Activated T-helper 2 cell treated with anti-CD3 and anti-CD28 coated beads, Interferon-gamma antibody, Interleukin-2, Interleukin-4, amounts not matched to agents 10 μg/mL and 5 μg/mL and 100 μg/mL, durations not matched to agents 14 hours and 24 hours and 36 hours (primary cell): ENCODE measurements at regions of chr11 and their contacts with region 1.

Region 1: DNA sequence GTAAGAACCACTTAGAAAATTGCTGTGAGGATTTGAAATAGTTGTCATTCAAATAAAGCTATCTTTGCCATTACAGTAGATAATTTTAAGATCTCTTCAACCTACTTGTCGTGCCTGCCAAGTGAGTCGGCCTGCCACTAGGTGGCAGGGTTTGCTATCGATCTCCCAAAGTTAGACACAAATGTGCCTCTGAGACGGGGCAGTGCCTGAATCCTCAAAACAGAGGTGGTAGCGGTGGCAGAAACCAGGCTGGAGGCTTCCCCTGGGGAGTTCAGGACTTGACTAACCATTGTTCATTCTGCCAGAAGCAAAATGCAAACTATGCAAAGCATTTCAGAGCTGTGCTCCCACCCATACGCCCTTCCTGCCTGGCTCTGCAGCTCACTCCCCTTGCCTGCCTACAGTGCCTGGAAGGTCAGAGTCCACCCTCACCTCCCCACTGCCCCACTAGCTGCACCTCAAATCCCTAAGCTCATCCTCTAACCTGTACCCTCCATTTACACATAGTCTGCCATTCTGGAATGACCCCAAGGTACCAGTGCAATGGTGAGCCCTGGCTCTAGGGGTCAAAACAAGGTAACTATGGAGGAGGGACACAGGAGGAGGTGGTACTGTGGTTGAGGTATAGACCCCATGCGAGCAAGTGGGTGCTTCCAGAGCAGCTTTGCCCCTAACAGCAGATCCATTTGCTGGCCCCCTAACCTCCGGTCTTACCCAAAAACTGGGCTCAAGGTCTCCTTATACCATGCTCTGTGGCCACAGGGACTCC is 82.1 kb downstream of the C11orf58 start:
- DNase-seq: peak; percentile 23
- H3K4me3 Mint-ChIP-seq: no peak overlapping the region
- H3K27ac Mint-ChIP-seq: peak overlapping the region; percentile 33
- H3K4me1 Mint-ChIP-seq: peaks cover 24% of the 10 kb centered on the region
- H3K27me3 Mint-ChIP-seq: peaks cover 2% of the 10 kb centered on the region

Region 2: DNA sequence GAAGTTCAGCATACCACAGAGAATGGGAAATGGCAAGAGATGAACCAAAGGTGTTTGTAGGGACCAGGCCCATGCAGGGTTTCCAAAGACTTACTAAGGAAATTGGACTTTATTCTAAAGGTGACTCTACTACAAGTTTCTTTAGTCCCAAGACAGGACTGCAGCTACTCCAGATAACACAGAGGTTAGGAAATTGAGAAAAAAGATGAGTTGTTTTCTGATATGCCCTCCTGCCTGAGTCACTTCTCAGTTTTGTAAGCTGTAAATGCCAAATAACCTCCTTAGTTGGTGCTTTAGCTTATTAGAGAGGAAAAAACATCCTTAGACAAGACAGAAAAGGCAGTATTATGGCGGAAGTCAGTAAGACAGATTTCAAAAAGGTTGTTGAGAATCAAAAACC is 13.9 kb after region 1 on chr11:
- intact Hi-C with region 1: loop called (anchors 2 kb)
- DNase-seq: no peak
- H3K4me3 Mint-ChIP-seq: no peak overlapping the region
- H3K27ac Mint-ChIP-seq: peak overlapping the region; percentile 74
- H3K4me1 Mint-ChIP-seq: peaks cover 20% of the 10 kb centered on the region
- H3K27me3 Mint-ChIP-seq: no peaks in the 10 kb centered on the region

Region 3: GRCh38 chr11:16881074-16881709 is 60.7 kb after region 1 on chr11:
- intact Hi-C with region 1: loop called (anchors 2 kb)
- DNase-seq: no peak
- H3K4me3 Mint-ChIP-seq: no peak overlapping the region
- H3K27ac Mint-ChIP-seq: no peak overlapping the region
- H3K4me1 Mint-ChIP-seq: peaks cover 14% of the 10 kb centered on the region
- H3K27me3 Mint-ChIP-seq: no peaks in the 10 kb centered on the region

Region 4: DNA sequence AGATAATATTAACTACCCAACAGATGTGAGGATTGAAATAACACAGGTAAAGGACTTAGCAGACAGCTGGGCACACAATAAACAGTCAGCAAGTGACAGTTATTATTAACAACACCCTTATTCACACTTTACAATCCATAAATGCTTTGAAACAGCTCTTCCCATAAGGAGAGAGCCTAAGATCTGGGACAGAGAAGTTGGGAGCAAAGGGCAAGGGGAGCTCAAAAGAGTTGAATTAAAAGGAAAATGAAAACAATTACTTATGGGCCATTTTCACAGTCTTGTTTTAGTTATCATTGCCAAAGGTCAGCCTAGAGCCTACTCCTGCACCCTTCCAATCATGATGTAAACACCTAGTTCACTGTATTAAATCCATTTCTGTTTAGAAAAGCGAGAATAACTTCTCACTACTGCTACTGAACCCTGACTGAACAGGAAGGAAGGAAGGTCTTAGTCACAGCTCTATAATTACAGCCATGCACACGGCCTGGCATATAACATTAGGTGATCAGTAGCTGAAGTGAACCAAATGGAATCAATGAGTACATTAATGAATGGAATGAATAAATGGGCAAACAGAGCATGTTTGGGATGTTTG is 82.4 kb after region 1 on chr11:
- intact Hi-C with region 1: loop called (anchors 2 kb)
- DNase-seq: no peak
- H3K4me3 Mint-ChIP-seq: peak overlapping the region; percentile 31
- H3K27ac Mint-ChIP-seq: peak overlapping the region; percentile 99
- H3K4me1 Mint-ChIP-seq: peaks cover 50% of the 10 kb centered on the region
- H3K27me3 Mint-ChIP-seq: no peaks in the 10 kb centered on the region

Region 5: GRCh38 chr11:16935518-16936302 is 115.2 kb after region 1 on chr11:
- intact Hi-C with region 1: loop called (anchors 1 kb)
- DNase-seq: no peak
- H3K4me3 Mint-ChIP-seq: no peak overlapping the region
- H3K27ac Mint-ChIP-seq: no peak overlapping the region
- H3K4me1 Mint-ChIP-seq: no peaks in the 10 kb centered on the region
- H3K27me3 Mint-ChIP-seq: peaks cover 11% of the 10 kb centered on the region

Region 6: GRCh38 chr11:17063171-17064002 is 242.9 kb after region 1 on chr11:
- intact Hi-C with region 1: loop called (anchors 1 kb)
- DNase-seq: no peak
- H3K4me3 Mint-ChIP-seq: no peak overlapping the region
- H3K27ac Mint-ChIP-seq: no peak overlapping the region
- H3K4me1 Mint-ChIP-seq: no peaks in the 10 kb centered on the region
- H3K27me3 Mint-ChIP-seq: peaks cover 5% of the 10 kb centered on the region

Region 7: GRCh38 chr11:17077520-17078401 is 257.3 kb after region 1 on chr11 and contains the start of gene RPS13:
- intact Hi-C with region 1: loop called (anchors 5 kb)
- DNase-seq: peak; percentile 95
- H3K4me3 Mint-ChIP-seq: peak within 1 kb of the TSS; percentile 100
- H3K27ac Mint-ChIP-seq: peak within 1 kb of the TSS; percentile 97
- H3K4me1 Mint-ChIP-seq: peaks cover 36% of the 10 kb centered on the region
- H3K27me3 Mint-ChIP-seq: no peaks in the 10 kb centered on the region
- total RNA-seq, gene RPS13: 1,360 and 1,371 TPM in 2 replicates